H1 (cell line): ENCODE measurements at regions of chr11 and their contacts with region 1.

Region 1: GRCh38 chr11:12411806-12412727 is 34.7 kb downstream of the PARVA start:
- DNase-seq: peak; percentile 68 to 93
- H3K4me3 ChIP-seq: no peak overlapping the region
- H3K27ac ChIP-seq: no peak overlapping the region
- H3K4me1 ChIP-seq: peaks cover 0 to 7% (median 4%) of the 10 kb centered on the region in 4 experiments; a peak in 4 of 7 replicates
- H3K27me3 ChIP-seq: no peaks in the 10 kb centered on the region
- CTCF ChIP-seq: peak; percentile 83 to 85 (median 85)
- EP300 ChIP-seq: no peak
- POLR2A ChIP-seq: no peak
- RAD21 ChIP-seq: peak; percentile 89 to 90

Region 2: GRCh38 chr11:12429155-12429554 is 17.1 kb after region 1 on chr11:
- CTCF ChIA-PET with region 1: interaction called, 20 read pairs
- POLR2A ChIA-PET with region 1: interaction called, 3 read pairs
- DNase-seq: no peak
- H3K4me3 ChIP-seq: no peak overlapping the region
- H3K27ac ChIP-seq: no peak overlapping the region
- H3K4me1 ChIP-seq: 0 out of 7 replicates have a peak, but pooled peaks cover 0 to under 1% (median under 1%) of the 10 kb centered on the region in 4 experiments
- H3K27me3 ChIP-seq: no peaks in the 10 kb centered on the region
- CTCF ChIP-seq: no peak
- EP300 ChIP-seq: no peak
- POLR2A ChIP-seq: no peak
- RAD21 ChIP-seq: no peak

Region 3: DNA sequence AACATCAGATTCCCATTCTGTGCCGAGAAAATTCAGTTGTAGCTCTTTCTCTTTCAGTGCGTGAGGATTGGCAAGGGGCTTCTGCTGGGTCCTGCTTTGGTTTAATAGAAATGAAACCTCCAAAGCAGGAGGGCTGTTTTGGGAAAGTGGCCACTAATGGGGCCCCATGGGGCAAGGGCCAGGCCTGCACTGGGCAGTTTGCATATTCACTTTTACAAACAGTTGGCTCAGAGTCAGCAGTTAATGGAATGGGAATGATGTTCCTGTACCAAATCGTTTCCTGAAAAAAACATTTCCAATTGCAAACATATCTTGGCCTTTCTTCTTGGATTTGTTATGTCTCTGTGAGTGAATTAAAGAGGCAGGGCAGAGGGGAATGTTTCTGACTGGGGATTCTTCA is 57.4 kb after region 1 on chr11:
- CTCF ChIA-PET with region 1: interaction called, 11 read pairs
- POLR2A ChIA-PET with region 1: no interaction called
- DNase-seq: no peak
- H3K4me3 ChIP-seq: no peak overlapping the region
- H3K27ac ChIP-seq: no peak overlapping the region
- H3K4me1 ChIP-seq: peaks cover 2 to 7% (median 5%) of the 10 kb centered on the region in 4 experiments; a peak in 3 of 7 replicates
- H3K27me3 ChIP-seq: no peaks in the 10 kb centered on the region
- CTCF ChIP-seq: no peak
- EP300 ChIP-seq: no peak
- POLR2A ChIP-seq: no peak
- RAD21 ChIP-seq: no peak